A549 (cell line): ENCODE measurements at regions of chr2 and their contacts with region 1.

Region 1: DNA sequence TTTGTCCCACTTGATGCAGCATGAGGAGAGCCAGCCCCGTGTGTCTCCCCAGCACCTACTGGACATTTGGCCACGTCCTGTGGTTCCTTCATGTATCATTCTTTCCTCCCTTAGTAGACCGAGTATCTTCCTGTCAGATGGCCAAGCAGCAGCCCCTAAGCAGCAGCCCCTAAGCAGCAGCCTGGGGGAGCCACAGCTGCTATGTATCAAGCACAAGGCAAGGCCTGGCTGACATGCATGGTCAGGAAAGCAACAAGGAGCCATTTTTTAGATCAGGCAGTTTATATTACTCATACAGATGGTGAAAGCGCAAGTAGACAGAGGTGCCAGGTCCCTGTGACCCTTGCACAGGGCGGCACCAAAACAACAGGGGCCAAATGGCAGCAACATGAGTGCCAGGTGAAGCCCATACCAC is 22.1 kb downstream of the CHCHD5 start:
- DNase-seq: no peak
- ATAC-seq: peak; percentile 44 to 59; a peak in 4 of 6 replicates
- H3K4me3 ChIP-seq: no peak overlapping the region
- H3K27ac ChIP-seq: peak overlapping the region in 1 of 2 experiments; percentile 22; a peak in 1 of 6 replicates
- H3K4me1 ChIP-seq: no peaks in the 10 kb centered on the region
- CTCF ChIP-seq: no peak
- EP300 ChIP-seq: no peak
- POLR2A ChIP-seq: no peak
- RAD21 ChIP-seq: no peak

Region 2: GRCh38 chr2:112584134-112584890 is 22.2 kb before region 1 on chr2 and contains the start of gene CHCHD5:
- CTCF ChIA-PET with region 1: interaction called, 54 read pairs
- POLR2A ChIA-PET with region 1: interaction called, 3 read pairs
- DNase-seq: peak; percentile 89 to 97
- ATAC-seq: peak; percentile 88 to 92
- H3K4me3 ChIP-seq: peak within 1 kb of the TSS; percentile 55
- H3K27ac ChIP-seq: peak within 1 kb of the TSS; percentile 96 to 97
- H3K4me1 ChIP-seq: peaks cover 21% of the 10 kb centered on the region
- CTCF ChIP-seq: no peak
- EP300 ChIP-seq: no peak; a peak in 1 of 5 replicates
- POLR2A ChIP-seq: peak; percentile 57
- RAD21 ChIP-seq: no peak
- polyA plus RNA-seq, gene CHCHD5: 15.0 and 17.6 TPM in 2 replicates

Region 3: DNA sequence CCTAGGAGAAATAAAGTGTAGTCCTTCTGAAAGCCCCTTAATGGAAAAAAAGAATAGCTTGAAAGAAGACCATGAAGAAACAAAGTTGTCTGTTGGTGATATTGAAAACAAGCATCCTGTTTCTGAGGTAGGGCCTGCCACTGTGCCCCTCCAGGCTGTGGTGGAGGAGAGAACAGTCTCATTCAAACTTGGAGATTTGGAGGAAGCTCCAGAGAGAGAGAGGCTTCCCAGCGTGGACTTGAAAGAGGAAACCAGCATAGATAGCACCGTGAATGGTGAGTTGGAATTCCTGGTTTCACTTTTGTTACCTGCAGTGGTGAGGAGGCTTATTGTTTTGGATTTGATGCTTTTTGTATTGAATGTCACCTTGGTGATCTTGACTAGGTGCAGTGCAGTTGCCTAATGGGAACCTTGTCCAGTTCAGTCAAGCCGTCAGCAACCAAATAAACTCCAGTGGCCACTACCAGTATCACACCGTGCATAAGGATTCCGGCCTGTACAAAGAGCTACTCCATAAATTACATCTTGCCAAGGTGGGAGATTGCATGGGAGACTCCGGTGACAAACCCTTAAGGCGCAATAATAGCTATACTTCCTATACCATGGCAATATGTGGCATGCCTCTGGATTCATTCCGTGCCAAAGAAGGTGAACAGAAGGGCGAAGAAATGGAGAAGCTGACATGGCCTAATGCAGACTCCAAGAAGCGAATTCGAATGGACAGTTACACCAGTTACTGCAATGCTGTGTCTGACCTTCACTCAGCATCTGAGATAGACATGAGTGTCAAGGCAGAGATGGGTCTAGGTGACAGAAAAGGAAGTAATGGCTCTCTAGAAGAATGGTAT is 52.5 kb after region 1 on chr2:
- CTCF ChIA-PET with region 1: interaction called, 12 read pairs
- POLR2A ChIA-PET with region 1: no interaction called
- DNase-seq: peak in 1 of 2 experiments; percentile 41
- ATAC-seq: peak; percentile 68 to 73
- H3K4me3 ChIP-seq: no peak overlapping the region
- H3K27ac ChIP-seq: no peak overlapping the region
- H3K4me1 ChIP-seq: peaks cover 45% of the 10 kb centered on the region
- CTCF ChIP-seq: no peak
- EP300 ChIP-seq: no peak
- POLR2A ChIP-seq: no peak
- RAD21 ChIP-seq: no peak

Region 4: GRCh38 chr2:112706170-112706664 is 99.7 kb after region 1 on chr2:
- CTCF ChIA-PET with region 1: interaction called, 15 read pairs
- POLR2A ChIA-PET with region 1: no interaction called
- DNase-seq: no peak
- ATAC-seq: no peak; a peak in 1 of 6 replicates
- H3K4me3 ChIP-seq: no peak overlapping the region
- H3K27ac ChIP-seq: no peak overlapping the region
- H3K4me1 ChIP-seq: no peaks in the 10 kb centered on the region
- CTCF ChIP-seq: no peak
- EP300 ChIP-seq: no peak
- POLR2A ChIP-seq: no peak
- RAD21 ChIP-seq: no peak